ENCODE measurements at regions of chr6 and their contacts with region 1.

Region 1: DNA sequence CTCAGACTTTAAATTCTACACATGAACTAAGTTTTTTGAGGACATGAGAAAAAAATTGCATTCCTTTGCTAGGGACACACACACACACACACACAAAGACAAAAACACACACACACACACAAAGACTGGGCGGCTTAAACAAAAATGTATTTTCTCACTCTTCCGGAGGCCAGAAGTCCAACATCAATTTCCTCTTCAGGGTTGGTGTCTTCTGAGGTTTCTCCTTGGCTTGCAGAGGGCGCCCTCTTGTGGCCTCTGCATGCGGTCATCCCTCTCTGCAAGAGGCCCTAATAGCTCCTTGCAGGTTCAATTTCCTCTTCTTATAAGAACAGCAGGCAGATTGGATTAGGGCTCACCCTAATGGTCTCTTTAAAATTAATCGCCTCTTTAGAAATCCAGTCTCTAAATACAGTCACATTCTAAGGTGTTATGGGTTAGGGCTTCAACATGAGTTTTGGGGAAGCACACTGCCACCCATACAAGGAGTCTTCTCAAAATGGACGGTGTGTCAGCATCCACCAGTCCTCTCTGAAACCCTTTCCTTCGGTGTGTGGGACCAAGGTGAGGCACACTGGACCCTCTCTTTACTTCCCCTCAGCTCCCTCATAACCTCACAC is 61.4 kb downstream of the GPR6 start:
- DNase-seq: peak; percentile 66 to 81 (median 78)
- ATAC-seq: peak; percentile 92
- H3K4me3 ChIP-seq: peak overlapping the region; percentile 54
- H3K4me3 Mint-ChIP-seq: peak overlapping the region; percentile 89 to 97 (median 90)
- H3K27ac ChIP-seq: peak overlapping the region; percentile 53
- H3K27ac Mint-ChIP-seq: peak overlapping the region; percentile 80 to 98 (median 92)
- H3K4me1 ChIP-seq: peaks cover 0 to 14% of the 10 kb centered on the region in 2 donors
- H3K4me1 Mint-ChIP-seq: peaks cover 9 to 17% (median 13%) of the 10 kb centered on the region in 7 donors
- H3K27me3 ChIP-seq: no peaks in the 10 kb centered on the region
- H3K27me3 Mint-ChIP-seq: no peaks in the 10 kb centered on the region

Region 2: GRCh38 chr6:109491207-109491938 is 548.1 kb before region 1 on chr6:
- CTCF ChIA-PET with region 1: interaction called, 12 read pairs
- POLR2A ChIA-PET with region 1: no interaction called
- intact Hi-C with region 1: no loop called
- DNase-seq: peak in 6 of 9 donors; percentile 23 to 57 (median 39)
- ATAC-seq: peak; percentile 92
- H3K4me3 ChIP-seq: no peak overlapping the region
- H3K4me3 Mint-ChIP-seq: peak overlapping the region in 8 of 10 donors; percentile 4 to 70 (median 42)
- H3K27ac ChIP-seq: peak overlapping the region; percentile 1
- H3K27ac Mint-ChIP-seq: peak overlapping the region; percentile 19 to 84 (median 60)
- H3K4me1 ChIP-seq: peaks cover 15 to 17% of the 10 kb centered on the region in 2 donors
- H3K4me1 Mint-ChIP-seq: peaks cover 12 to 36% (median 25%) of the 10 kb centered on the region in 7 donors
- H3K27me3 ChIP-seq: no peaks in the 10 kb centered on the region
- H3K27me3 Mint-ChIP-seq: peaks cover 0 to 5% (median 0%) of the 10 kb centered on the region in 5 donors

Region 3: DNA sequence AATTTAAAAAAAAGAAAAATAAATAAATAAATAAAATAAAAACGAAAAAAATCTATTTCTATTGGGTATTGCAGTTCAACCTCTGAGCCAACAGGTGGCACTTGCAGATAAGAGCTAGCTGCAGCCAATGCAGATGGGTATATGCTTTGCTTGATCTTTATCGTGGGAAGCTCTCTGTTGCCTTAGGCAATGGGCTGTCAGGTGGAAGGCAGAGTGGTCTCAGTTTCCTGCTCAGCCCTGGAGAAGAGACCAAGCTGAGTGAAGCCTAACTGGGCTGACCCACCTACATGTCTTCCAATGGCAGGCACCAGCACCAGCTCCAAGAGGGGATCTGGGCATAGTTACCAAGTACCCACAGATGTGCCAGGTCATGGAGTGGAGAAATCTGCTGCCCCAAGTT is 443.5 kb before region 1 on chr6:
- CTCF ChIA-PET with region 1: interaction called, 6 read pairs
- POLR2A ChIA-PET with region 1: no interaction called
- intact Hi-C with region 1: loop called (anchors 1 kb)
- DNase-seq: peak in 5 of 9 donors; percentile 26 to 45 (median 35)
- ATAC-seq: peak; percentile 44
- H3K4me3 ChIP-seq: no peak overlapping the region
- H3K4me3 Mint-ChIP-seq: no peak overlapping the region
- H3K27ac ChIP-seq: no peak overlapping the region
- H3K27ac Mint-ChIP-seq: no peak overlapping the region
- H3K4me1 ChIP-seq: no peaks in the 10 kb centered on the region
- H3K4me1 Mint-ChIP-seq: peaks cover 2 to 13% (median 5%) of the 10 kb centered on the region in 7 donors
- H3K27me3 ChIP-seq: no peaks in the 10 kb centered on the region
- H3K27me3 Mint-ChIP-seq: no peaks in the 10 kb centered on the region

Region 4: GRCh38 chr6:109727622-109728021 is 311.9 kb before region 1 on chr6:
- CTCF ChIA-PET with region 1: no interaction called
- POLR2A ChIA-PET with region 1: no interaction called
- intact Hi-C with region 1: no loop called
- DNase-seq: no peak
- ATAC-seq: no peak
- H3K4me3 ChIP-seq: no peak overlapping the region
- H3K4me3 Mint-ChIP-seq: no peak overlapping the region
- H3K27ac ChIP-seq: no peak overlapping the region
- H3K27ac Mint-ChIP-seq: no peak overlapping the region
- H3K4me1 ChIP-seq: no peaks in the 10 kb centered on the region
- H3K4me1 Mint-ChIP-seq: peaks cover 0 to 3% (median 0%) of the 10 kb centered on the region in 7 donors
- H3K27me3 ChIP-seq: no peaks in the 10 kb centered on the region
- H3K27me3 Mint-ChIP-seq: no peaks in the 10 kb centered on the region

Region 5: GRCh38 chr6:109788687-109789086 is 250.8 kb before region 1 on chr6:
- CTCF ChIA-PET with region 1: no interaction called
- POLR2A ChIA-PET with region 1: no interaction called
- intact Hi-C with region 1: loop called in 1 of 2 experiments (anchors 5 kb)
- DNase-seq: no peak
- ATAC-seq: no peak
- H3K4me3 ChIP-seq: no peak overlapping the region
- H3K4me3 Mint-ChIP-seq: no peak overlapping the region
- H3K27ac ChIP-seq: no peak overlapping the region
- H3K27ac Mint-ChIP-seq: no peak overlapping the region
- H3K4me1 ChIP-seq: no peaks in the 10 kb centered on the region
- H3K4me1 Mint-ChIP-seq: peaks cover 0 to 10% (median 0%) of the 10 kb centered on the region in 7 donors
- H3K27me3 ChIP-seq: no peaks in the 10 kb centered on the region
- H3K27me3 Mint-ChIP-seq: no peaks in the 10 kb centered on the region

Region 6: GRCh38 chr6:109925079-109925478 is 114.4 kb before region 1 on chr6:
- CTCF ChIA-PET with region 1: no interaction called
- POLR2A ChIA-PET with region 1: no interaction called
- intact Hi-C with region 1: no loop called
- DNase-seq: no peak
- ATAC-seq: no peak
- H3K4me3 ChIP-seq: no peak overlapping the region
- H3K4me3 Mint-ChIP-seq: no peak overlapping the region
- H3K27ac ChIP-seq: no peak overlapping the region
- H3K27ac Mint-ChIP-seq: no peak overlapping the region
- H3K4me1 ChIP-seq: no peaks in the 10 kb centered on the region
- H3K4me1 Mint-ChIP-seq: peaks cover 0 to 1% (median 0%) of the 10 kb centered on the region in 7 donors
- H3K27me3 ChIP-seq: no peaks in the 10 kb centered on the region
- H3K27me3 Mint-ChIP-seq: peaks cover 8 to 29% (median 16%) of the 10 kb centered on the region in 5 donors

Region 7: DNA sequence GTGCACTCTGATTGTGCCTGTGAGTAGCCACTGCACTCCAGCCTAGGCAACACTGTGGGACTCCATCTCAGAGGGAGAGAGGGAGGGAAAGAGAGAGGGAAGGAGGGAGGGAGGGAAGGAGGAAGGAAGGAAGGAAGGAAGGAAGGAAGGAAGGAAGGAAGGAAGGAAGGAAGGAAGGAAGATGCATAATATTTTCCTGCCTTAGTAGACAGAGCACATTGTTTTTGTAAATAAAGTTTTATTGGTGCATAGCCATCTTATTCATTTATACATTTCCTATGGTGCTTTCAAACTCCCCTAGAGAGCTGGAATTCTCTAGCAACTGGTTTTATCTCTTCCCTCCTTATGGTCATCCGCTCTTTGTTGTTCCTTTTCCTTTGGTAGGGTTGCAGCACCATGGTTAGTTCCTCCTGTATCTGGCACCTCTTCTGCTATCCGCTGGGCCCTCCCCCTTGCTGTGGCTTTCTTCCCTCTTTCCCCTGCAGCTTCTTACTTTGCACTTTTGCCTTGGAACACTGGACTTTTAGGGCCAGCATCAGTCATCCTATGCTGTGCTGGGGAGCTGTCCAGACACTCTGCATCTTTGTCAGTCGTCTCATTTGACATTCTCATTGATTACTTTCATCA is 41.2 kb before region 1 on chr6:
- CTCF ChIA-PET with region 1: no interaction called
- POLR2A ChIA-PET with region 1: no interaction called
- intact Hi-C with region 1: no loop called
- DNase-seq: no peak
- ATAC-seq: no peak
- H3K4me3 ChIP-seq: no peak overlapping the region
- H3K4me3 Mint-ChIP-seq: no peak overlapping the region
- H3K27ac ChIP-seq: no peak overlapping the region
- H3K27ac Mint-ChIP-seq: no peak overlapping the region
- H3K4me1 ChIP-seq: no peaks in the 10 kb centered on the region
- H3K4me1 Mint-ChIP-seq: peaks cover 0 to 3% (median 0%) of the 10 kb centered on the region in 7 donors
- H3K27me3 ChIP-seq: peaks cover 0 to 7% of the 10 kb centered on the region in 2 donors
- H3K27me3 Mint-ChIP-seq: peaks cover 12 to 40% (median 31%) of the 10 kb centered on the region in 5 donors